ENCODE measurements at regions of chr3 and their contacts with region 1.

Region 1: GRCh38 chr3:87333393-87333892 is 57.1 kb upstream of the POU1F1 start:
- DNase-seq: peak; percentile 62
- H3K4me3 Mint-ChIP-seq: no peak overlapping the region
- H3K27ac Mint-ChIP-seq: peak overlapping the region; percentile 87
- H3K4me1 Mint-ChIP-seq: peaks cover 21% of the 10 kb centered on the region
- H3K27me3 Mint-ChIP-seq: peaks cover 2% of the 10 kb centered on the region

Region 2: DNA sequence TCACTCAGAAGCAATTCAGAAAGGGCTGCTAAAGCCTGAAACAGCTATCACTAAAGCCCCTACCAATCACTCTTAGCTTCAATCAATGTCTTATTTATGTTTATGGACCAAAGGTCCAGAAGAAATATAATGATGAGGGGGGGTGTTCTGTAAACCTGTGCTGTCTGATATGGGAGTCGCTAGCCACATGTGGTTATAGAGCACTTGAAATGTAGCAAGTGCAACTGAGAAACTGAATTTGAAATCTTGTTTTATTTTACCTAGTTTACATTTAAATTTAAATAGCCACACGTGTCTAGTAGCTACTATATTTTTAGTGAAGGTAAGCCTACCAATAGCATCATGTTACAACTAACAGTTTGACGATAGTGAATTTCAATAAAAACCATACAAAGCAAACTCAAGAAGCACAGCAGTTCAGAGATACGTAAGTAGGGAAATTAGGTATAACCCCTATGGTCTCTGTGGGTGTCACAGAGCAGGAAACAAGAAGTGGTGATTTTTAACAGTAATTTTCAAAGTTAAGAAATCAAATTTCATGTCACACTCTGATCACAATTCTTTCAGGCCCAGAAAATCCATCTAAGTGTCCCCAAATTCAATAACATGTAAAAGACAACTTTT is 60.6 kb before region 1 on chr3:
- CTCF ChIA-PET with region 1: no interaction called
- POLR2A ChIA-PET with region 1: no interaction called
- intact Hi-C with region 1: loop called (anchors 1 kb)
- DNase-seq: no peak
- H3K4me3 Mint-ChIP-seq: no peak overlapping the region
- H3K27ac Mint-ChIP-seq: no peak overlapping the region
- H3K4me1 Mint-ChIP-seq: peaks cover 26% of the 10 kb centered on the region
- H3K27me3 Mint-ChIP-seq: peaks cover 7% of the 10 kb centered on the region

Region 3: GRCh38 chr3:87313641-87314040 is 19.8 kb before region 1 on chr3:
- CTCF ChIA-PET with region 1: interaction called, 4 read pairs
- POLR2A ChIA-PET with region 1: interaction called, 5 read pairs
- intact Hi-C with region 1: loop called (anchors 1 kb)
- DNase-seq: peak; percentile 22
- H3K4me3 Mint-ChIP-seq: no peak overlapping the region
- H3K27ac Mint-ChIP-seq: no peak overlapping the region
- H3K4me1 Mint-ChIP-seq: peaks cover 13% of the 10 kb centered on the region
- H3K27me3 Mint-ChIP-seq: peaks cover 8% of the 10 kb centered on the region

Region 4: GRCh38 chr3:87792534-87793336 is 459.3 kb after region 1 on chr3:
- CTCF ChIA-PET with region 1: no interaction called
- POLR2A ChIA-PET with region 1: no interaction called
- intact Hi-C with region 1: no loop called
- DNase-seq: no peak
- H3K4me3 Mint-ChIP-seq: peak within 1 kb of the TSS; percentile 50
- H3K27ac Mint-ChIP-seq: no peak within 1 kb of the TSS
- H3K4me1 Mint-ChIP-seq: peaks cover 27% of the 10 kb centered on the region
- H3K27me3 Mint-ChIP-seq: peaks cover 55% of the 10 kb centered on the region

Region 5: GRCh38 chr3:87997298-87997697 is 663.9 kb after region 1 on chr3:
- CTCF ChIA-PET with region 1: no interaction called
- POLR2A ChIA-PET with region 1: no interaction called
- intact Hi-C with region 1: loop called (anchors 1 kb)
- DNase-seq: peak; percentile 75
- H3K4me3 Mint-ChIP-seq: peak overlapping the region; percentile 22
- H3K27ac Mint-ChIP-seq: no peak overlapping the region
- H3K4me1 Mint-ChIP-seq: peaks cover 16% of the 10 kb centered on the region
- H3K27me3 Mint-ChIP-seq: peaks cover 2% of the 10 kb centered on the region

Measured in activated CD4-positive, alpha-beta memory T cell treated with anti-CD3 and anti-CD28 coated beads for 36 hours (primary cell).